Posterior cingulate gyrus (tissue), 11 donors: ENCODE measurements at regions of chr4 and their contacts with region 1.

Region 1: GRCh38 chr4:80215449-80216052 is 18.2 kb downstream of the PRDM8 start:
- DNase-seq: peak in 1 of 10 donors; percentile 2

Region 2: GRCh38 chr4:78951862-78952472 is 1263.6 kb before region 1 on chr4:
- intact Hi-C with region 1: loop called (anchors 5 kb)
- DNase-seq: peak in 1 of 10 donors; percentile 29

Region 3: GRCh38 chr4:80125252-80126177 is 90.0 kb before region 1 on chr4:
- intact Hi-C with region 1: loop called (anchors 5 kb)
- DNase-seq: no peak

Region 4: DNA sequence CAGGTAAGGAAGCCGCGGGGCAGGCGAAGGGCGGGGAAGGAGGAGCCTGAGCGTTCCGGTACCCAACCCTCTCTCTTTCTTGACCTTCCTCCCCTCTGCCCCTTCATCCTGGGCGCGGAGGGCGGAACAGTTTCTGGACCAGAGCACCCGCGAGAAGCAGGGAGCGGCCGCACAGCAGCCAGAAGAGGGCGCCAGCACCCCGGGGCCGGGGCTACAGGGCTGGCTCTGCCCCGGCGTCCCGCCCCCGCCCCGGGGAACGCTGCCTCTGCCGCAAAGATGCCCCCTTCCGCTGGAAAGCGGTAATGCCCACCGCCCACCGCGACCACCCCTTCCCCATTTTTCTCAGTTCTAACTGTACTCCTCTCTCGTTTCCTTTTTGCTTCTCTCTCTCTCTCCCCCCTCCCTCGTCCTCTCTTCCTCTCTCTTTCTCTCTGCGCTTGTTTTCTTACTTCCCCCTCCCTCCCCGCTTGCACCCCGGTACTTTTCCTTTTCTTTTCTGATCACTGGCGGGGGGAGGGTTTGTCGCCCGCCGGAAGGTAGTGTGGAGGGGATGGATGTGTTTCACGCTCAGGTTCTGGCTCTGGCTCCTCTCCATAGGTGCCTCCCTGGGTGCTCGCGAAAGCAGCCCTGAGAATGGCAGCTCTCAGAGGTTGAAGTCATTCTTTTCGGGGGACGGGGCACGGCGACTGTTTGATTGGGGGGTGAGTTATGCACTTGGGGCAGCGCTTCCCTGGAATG is 31.3 kb before region 1 on chr4:
- intact Hi-C with region 1: loop called (anchors 5 kb)
- DNase-seq: peak; percentile 68 to 97 (median 82)